GM12878 (cell line): ENCODE measurements at regions of chrX and their contacts with region 1.

Region 1: GRCh38 chrX:65595460-65595876 is 60.9 kb upstream of the LAS1L start:
- DNase-seq: peak; percentile 89
- ATAC-seq: peak; percentile 88
- H3K4me3 ChIP-seq: no peak overlapping the region
- H3K27ac ChIP-seq: peak overlapping the region; percentile 67
- H3K4me1 ChIP-seq: peaks cover 19% of the 10 kb centered on the region
- H3K27me3 ChIP-seq: no peaks in the 10 kb centered on the region
- CTCF ChIP-seq: peak; percentile 98 to 100 (median 99); a peak in 5 of 6 replicates
- EP300 ChIP-seq: no peak
- POLR2A ChIP-seq: no peak
- RAD21 ChIP-seq: peak; percentile 94

Region 2: DNA sequence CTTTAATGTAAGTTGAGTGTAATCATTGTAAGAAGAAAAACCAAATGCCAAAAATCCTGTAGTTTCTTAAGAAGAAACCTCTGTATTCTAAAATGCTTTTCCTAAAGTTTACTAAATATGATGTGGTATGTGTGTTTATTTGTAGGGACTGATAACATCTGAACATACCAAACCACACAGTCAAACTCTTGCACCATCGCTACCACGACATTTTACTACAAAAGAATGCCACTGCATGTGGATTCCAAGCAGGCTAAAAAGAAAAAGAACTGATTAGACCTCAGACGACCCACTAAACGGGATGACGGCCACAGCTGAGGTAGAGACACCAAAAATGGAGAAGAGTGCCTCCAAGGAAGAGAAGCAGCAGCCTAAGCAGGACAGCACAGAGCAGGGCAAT is 107.0 kb before region 1 on chrX:
- CTCF ChIA-PET with region 1: no interaction called
- POLR2A ChIA-PET with region 1: no interaction called
- RAD21 ChIA-PET with region 1: no interaction called
- SMC1A ChIA-PET with region 1: no interaction called
- in situ Hi-C with region 1: no loop called
- intact Hi-C with region 1: no loop called
- DNase-seq: no peak
- ATAC-seq: no peak
- H3K4me3 ChIP-seq: no peak overlapping the region
- H3K27ac ChIP-seq: no peak overlapping the region
- H3K4me1 ChIP-seq: no peaks in the 10 kb centered on the region
- H3K27me3 ChIP-seq: no peaks in the 10 kb centered on the region
- CTCF ChIP-seq: no peak
- EP300 ChIP-seq: no peak
- POLR2A ChIP-seq: no peak
- RAD21 ChIP-seq: no peak

Region 3: DNA sequence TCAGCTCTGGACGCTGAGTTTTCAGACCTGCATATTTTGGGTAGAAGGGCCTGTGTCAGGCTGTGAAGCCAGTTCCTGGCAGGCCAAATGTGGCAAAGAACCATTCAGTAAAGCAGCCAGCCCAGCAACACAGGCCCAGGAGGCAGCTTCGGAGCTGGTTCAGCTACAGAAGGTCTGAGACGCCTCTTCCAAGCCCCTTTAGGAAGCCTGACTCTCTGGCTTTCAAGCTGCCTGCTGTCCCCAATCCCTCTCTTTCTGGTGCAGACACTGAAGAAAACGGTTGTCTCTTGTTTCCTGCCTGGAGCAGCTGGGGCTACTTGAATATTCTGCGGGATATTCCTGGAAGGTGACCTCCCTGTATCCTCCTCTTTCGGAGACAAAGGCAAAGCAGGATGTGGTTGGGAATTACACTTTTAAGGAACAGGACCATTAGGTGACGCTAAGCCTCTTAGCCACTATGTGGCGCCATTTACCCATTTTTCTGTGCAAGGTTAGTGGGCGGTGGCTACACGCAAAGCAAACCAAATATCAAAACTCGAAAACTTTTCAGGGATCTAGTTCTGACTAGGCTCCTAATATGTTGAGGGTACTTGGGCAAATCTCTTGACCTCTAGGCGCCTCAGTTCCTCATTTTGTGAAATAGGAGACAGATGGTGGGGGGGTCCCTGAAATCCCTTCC is 13.7 kb before region 1 on chrX:
- CTCF ChIA-PET with region 1: interaction called, 16 read pairs
- POLR2A ChIA-PET with region 1: no interaction called
- RAD21 ChIA-PET with region 1: interaction called, 4 read pairs
- SMC1A ChIA-PET with region 1: interaction called, 11 read pairs
- in situ Hi-C with region 1: no loop called
- intact Hi-C with region 1: no loop called
- DNase-seq: no peak
- ATAC-seq: peak; percentile 90
- H3K4me3 ChIP-seq: no peak overlapping the region
- H3K27ac ChIP-seq: no peak overlapping the region
- H3K4me1 ChIP-seq: peaks cover 14% of the 10 kb centered on the region; the same call in 1 of the 2 replicates
- H3K27me3 ChIP-seq: no peaks in the 10 kb centered on the region
- CTCF ChIP-seq: peak; percentile 70 to 89 (median 87)
- EP300 ChIP-seq: peak in 1 of 2 experiments; percentile 71; a peak in 2 of 4 replicates
- POLR2A ChIP-seq: no peak
- RAD21 ChIP-seq: peak; percentile 96

Region 4: DNA sequence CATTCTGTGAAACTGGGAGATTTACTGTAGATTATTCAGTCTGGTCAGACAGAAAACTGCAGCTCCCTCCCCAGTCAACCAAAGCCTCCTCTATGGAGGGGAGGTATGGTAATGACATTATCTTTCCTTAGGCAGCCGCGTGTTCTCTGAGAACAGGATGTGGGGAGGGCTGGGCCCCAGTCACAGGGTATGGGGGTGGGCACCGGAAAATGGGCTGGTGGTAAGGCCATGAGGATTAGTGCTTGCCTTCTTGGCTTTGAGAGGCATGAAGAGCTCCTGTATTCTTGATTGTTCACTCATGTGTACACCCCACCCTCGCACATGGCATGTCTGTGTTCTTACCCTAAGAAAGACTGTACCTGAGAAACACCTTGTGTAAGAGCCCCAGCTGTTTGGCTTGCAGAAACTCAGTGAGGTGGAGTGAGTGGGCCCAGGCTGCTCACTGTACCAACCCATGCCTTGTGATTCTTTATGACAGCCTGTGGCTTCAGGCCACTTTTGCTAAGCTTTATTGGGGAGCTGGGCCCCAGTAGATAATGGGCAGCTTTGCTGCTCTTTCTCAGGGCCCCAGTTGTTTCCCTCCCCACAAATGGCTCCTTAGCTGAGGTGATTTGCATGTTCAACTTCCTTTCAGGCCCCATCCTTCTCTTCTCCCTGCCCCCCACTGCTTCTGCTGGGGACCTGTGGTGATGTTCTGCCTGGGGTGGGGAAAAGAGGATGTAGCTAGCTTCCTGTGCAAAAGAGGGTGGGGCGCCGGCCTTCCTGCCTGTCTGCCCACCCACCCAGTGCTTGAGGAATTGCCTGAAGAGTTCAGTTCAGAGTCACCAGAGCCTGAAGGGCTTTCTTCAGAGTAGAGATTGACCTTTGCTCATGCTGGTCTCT is 102.7 kb after region 1 on chrX:
- CTCF ChIA-PET with region 1: interaction called, 26 read pairs
- POLR2A ChIA-PET with region 1: no interaction called
- RAD21 ChIA-PET with region 1: interaction called, 23 read pairs
- SMC1A ChIA-PET with region 1: interaction called, 37 read pairs
- in situ Hi-C with region 1: no loop called
- intact Hi-C with region 1: loop called (anchors 2 kb)
- DNase-seq: peak; percentile 83
- ATAC-seq: peak; percentile 72
- H3K4me3 ChIP-seq: peak overlapping the region; percentile 10; the same call in 1 of the 2 replicates
- H3K27ac ChIP-seq: peak overlapping the region; percentile 87
- H3K4me1 ChIP-seq: peaks cover 59% of the 10 kb centered on the region
- H3K27me3 ChIP-seq: no peaks in the 10 kb centered on the region
- CTCF ChIP-seq: no peak
- EP300 ChIP-seq: peak; percentile 12 to 54; a peak in 1 of 4 replicates
- POLR2A ChIP-seq: peak; percentile 55; the same call in 1 of the 2 replicates
- RAD21 ChIP-seq: no peak

Region 5: GRCh38 chrX:65750674-65751469 is 155.4 kb after region 1 on chrX:
- CTCF ChIA-PET with region 1: interaction called, 8 read pairs
- POLR2A ChIA-PET with region 1: no interaction called
- RAD21 ChIA-PET with region 1: interaction called, 7 read pairs
- SMC1A ChIA-PET with region 1: interaction called, 9 read pairs
- in situ Hi-C with region 1: no loop called
- intact Hi-C with region 1: loop called (anchors 5 kb)
- DNase-seq: peak; percentile 65
- ATAC-seq: peak; percentile 85
- H3K4me3 ChIP-seq: no peak overlapping the region
- H3K27ac ChIP-seq: no peak overlapping the region
- H3K4me1 ChIP-seq: peaks cover 7% of the 10 kb centered on the region
- H3K27me3 ChIP-seq: no peaks in the 10 kb centered on the region
- CTCF ChIP-seq: no peak
- EP300 ChIP-seq: no peak
- POLR2A ChIP-seq: no peak
- RAD21 ChIP-seq: no peak

Region 6: GRCh38 chrX:65837875-65838549 is 242.5 kb after region 1 on chrX:
- CTCF ChIA-PET with region 1: no interaction called
- POLR2A ChIA-PET with region 1: no interaction called
- RAD21 ChIA-PET with region 1: no interaction called
- SMC1A ChIA-PET with region 1: no interaction called
- in situ Hi-C with region 1: no loop called
- intact Hi-C with region 1: no loop called
- DNase-seq: no peak
- ATAC-seq: no peak
- H3K4me3 ChIP-seq: no peak overlapping the region
- H3K27ac ChIP-seq: no peak overlapping the region
- H3K4me1 ChIP-seq: no peaks in the 10 kb centered on the region
- H3K27me3 ChIP-seq: no peaks in the 10 kb centered on the region
- CTCF ChIP-seq: no peak
- EP300 ChIP-seq: no peak
- POLR2A ChIP-seq: no peak
- RAD21 ChIP-seq: no peak

Region 7: GRCh38 chrX:65985922-65986588 is 390.6 kb after region 1 on chrX:
- CTCF ChIA-PET with region 1: interaction called, 24 read pairs
- POLR2A ChIA-PET with region 1: no interaction called
- RAD21 ChIA-PET with region 1: interaction called, 9 read pairs
- SMC1A ChIA-PET with region 1: interaction called, 17 read pairs
- in situ Hi-C with region 1: no loop called
- intact Hi-C with region 1: loop called (anchors 1 kb)
- DNase-seq: peak; percentile 55
- ATAC-seq: peak; percentile 98
- H3K4me3 ChIP-seq: no peak overlapping the region
- H3K27ac ChIP-seq: no peak overlapping the region
- H3K4me1 ChIP-seq: no peaks in the 10 kb centered on the region
- H3K27me3 ChIP-seq: no peaks in the 10 kb centered on the region
- CTCF ChIP-seq: peak; percentile 53 to 67 (median 58); a peak in 5 of 6 replicates
- EP300 ChIP-seq: no peak
- POLR2A ChIP-seq: no peak
- RAD21 ChIP-seq: peak; percentile 81

Region 8: DNA sequence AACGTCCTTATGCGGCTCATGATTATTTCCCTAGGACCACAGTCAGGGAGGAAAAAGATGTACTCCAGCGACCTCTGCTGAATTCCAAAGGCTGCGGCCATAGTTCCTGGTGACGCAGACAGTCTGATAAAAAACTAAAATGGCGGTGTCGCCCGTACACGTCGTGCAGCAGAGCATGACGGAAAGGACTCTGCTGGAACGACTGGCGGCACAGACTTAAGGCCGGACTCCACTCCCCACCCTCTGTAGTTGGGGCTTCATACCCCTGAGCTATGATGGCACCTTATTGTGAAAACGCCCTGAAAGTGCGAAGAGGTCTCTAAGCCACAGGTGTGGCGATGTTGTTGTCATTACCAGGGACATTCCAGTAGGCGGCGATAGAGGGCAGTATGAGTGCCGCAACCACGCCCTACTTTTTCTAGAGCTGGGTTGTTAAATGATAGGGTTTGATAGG is 1133.4 kb after region 1 on chrX:
- CTCF ChIA-PET with region 1: interaction called, 6 read pairs
- POLR2A ChIA-PET with region 1: no interaction called
- RAD21 ChIA-PET with region 1: interaction called, 11 read pairs
- SMC1A ChIA-PET with region 1: interaction called, 6 read pairs
- in situ Hi-C with region 1: no loop called
- intact Hi-C with region 1: no loop called
- DNase-seq: no peak
- ATAC-seq: peak; percentile 69
- H3K4me3 ChIP-seq: no peak overlapping the region
- H3K27ac ChIP-seq: no peak overlapping the region
- H3K4me1 ChIP-seq: no peaks in the 10 kb centered on the region
- H3K27me3 ChIP-seq: no peaks in the 10 kb centered on the region
- CTCF ChIP-seq: peak; percentile 42 to 59 (median 55); a peak in 5 of 6 replicates
- EP300 ChIP-seq: no peak
- POLR2A ChIP-seq: no peak
- RAD21 ChIP-seq: peak; percentile 58